ENCODE measurements at regions of chr16 and their contacts with region 1.

Region 1: DNA sequence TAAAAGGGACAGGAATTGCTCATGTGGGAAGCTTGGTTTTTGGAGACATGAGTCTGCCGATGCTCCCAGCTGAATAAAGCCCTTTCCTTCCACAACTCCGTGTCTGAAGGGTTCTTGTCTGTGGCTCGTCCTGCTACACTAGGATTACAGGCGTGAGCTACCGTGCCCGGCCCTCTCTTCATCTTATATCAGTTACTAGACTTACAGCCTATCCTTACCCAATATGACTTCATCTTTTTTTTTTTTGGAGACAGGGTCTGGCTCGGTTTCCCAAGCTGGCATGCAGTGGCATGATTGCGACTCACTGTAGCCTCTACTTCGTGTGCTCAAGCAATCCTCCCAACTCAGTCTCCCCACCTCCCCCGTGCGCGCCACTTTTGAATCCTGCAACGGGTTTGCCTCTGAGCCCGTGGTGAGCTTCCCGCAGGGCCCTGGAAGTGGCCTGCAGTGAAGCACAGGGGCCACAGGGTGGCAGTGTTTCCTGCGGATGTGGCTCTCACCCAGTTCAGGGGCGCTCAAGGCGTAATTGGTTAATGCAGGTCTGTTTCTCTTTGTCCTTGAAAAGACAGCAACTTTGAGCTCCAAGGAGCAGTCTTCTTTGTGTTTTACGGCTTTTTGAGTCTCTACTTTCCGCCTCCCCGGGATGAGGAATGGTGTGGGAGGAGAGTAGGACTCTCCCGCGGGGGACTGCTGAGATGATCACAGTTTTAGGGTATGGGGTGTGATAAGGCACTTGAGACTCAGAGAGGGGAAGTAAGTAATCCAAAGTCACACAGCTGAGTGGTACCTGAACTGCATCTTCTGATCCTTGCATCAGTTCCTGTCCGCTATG is 22.7 kb upstream of the GPRC5B start:
- DNase-seq: peak; percentile 37
- H3K4me3 ChIP-seq: peak overlapping the region; percentile 22; the same call in 1 of the 2 replicates
- H3K27ac ChIP-seq: no peak overlapping the region
- H3K27me3 ChIP-seq: no peaks in the 10 kb centered on the region
- CTCF ChIP-seq: peak; percentile 100

Region 2: GRCh38 chr16:19583665-19584300 is 323.6 kb before region 1 on chr16:
- CTCF ChIA-PET with region 1: interaction called, 15 read pairs
- POLR2A ChIA-PET with region 1: no interaction called
- DNase-seq: peak; percentile 18
- H3K4me3 ChIP-seq: no peak overlapping the region
- H3K27ac ChIP-seq: no peak overlapping the region
- H3K27me3 ChIP-seq: no peaks in the 10 kb centered on the region
- CTCF ChIP-seq: peak; percentile 94

Region 3: GRCh38 chr16:19853742-19854542 is 53.4 kb before region 1 on chr16:
- CTCF ChIA-PET with region 1: no interaction called
- POLR2A ChIA-PET with region 1: no interaction called
- DNase-seq: no peak
- H3K4me3 ChIP-seq: no peak overlapping the region
- H3K27ac ChIP-seq: no peak overlapping the region
- H3K27me3 ChIP-seq: no peaks in the 10 kb centered on the region
- CTCF ChIP-seq: no peak

Region 4: GRCh38 chr16:19886073-19886941 is 21.1 kb before region 1 on chr16:
- CTCF ChIA-PET with region 1: interaction called, 22 read pairs
- POLR2A ChIA-PET with region 1: no interaction called
- DNase-seq: peak; percentile 54
- H3K4me3 ChIP-seq: no peak overlapping the region
- H3K27ac ChIP-seq: no peak overlapping the region
- H3K27me3 ChIP-seq: peaks cover 3% of the 10 kb centered on the region
- CTCF ChIP-seq: peak; percentile 100

Region 5: DNA sequence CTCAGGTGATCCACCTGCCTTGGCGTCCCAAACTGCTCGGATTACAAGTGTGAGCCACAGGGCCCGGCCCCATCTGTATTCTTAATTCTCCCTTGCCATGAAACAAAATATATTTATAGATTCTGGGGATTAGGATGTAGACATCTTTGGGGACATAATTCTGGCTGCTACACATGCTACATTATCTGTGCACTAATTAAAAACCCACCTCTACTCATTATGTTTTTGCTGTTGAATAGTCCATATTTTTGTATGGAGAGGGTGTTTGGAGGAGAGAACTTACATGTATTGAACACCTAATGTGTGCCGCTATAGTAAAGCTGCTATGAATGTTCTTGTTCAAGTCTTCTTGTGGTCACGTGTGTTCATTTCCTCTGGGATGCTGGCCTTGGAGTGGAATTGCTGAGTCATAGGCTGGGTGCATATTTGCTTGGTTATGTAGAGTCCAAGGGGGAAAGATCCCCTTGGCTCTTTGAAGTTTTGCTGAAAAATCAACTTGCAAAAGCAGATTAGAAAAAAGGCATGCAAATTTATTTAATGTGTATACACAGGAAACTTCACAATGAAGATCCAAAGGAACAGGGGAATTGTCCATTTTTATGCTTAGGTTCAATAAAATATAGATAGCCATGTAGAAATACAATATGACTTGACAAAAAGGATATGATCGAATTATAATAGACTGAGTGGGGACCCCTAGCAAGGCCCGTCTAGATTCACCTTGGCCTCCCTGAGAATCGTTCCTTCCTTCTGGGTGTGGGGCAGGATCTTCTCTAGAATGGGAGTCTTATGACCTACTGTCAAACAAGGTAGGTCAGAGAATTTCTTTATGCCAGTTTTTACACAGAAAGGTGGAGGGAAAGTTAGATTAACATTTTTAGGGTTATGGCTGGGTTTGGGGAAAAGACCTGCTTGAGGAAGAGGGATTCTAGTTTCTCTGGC is 19.3 kb after region 1 on chr16:
- CTCF ChIA-PET with region 1: interaction called, 25 read pairs
- POLR2A ChIA-PET with region 1: no interaction called
- DNase-seq: peak; percentile 53
- H3K4me3 ChIP-seq: no peak overlapping the region
- H3K27ac ChIP-seq: no peak overlapping the region
- H3K27me3 ChIP-seq: peaks cover 2% of the 10 kb centered on the region
- CTCF ChIP-seq: no peak

Region 6: GRCh38 chr16:20372701-20373100 is 465.3 kb after region 1 on chr16:
- CTCF ChIA-PET with region 1: interaction called, 14 read pairs
- POLR2A ChIA-PET with region 1: no interaction called
- DNase-seq: no peak
- H3K4me3 ChIP-seq: no peak overlapping the region
- H3K27ac ChIP-seq: no peak overlapping the region
- H3K27me3 ChIP-seq: no peaks in the 10 kb centered on the region
- CTCF ChIP-seq: no peak